ENCODE measurements at regions of chr5 and their contacts with region 1.

Region 1: DNA sequence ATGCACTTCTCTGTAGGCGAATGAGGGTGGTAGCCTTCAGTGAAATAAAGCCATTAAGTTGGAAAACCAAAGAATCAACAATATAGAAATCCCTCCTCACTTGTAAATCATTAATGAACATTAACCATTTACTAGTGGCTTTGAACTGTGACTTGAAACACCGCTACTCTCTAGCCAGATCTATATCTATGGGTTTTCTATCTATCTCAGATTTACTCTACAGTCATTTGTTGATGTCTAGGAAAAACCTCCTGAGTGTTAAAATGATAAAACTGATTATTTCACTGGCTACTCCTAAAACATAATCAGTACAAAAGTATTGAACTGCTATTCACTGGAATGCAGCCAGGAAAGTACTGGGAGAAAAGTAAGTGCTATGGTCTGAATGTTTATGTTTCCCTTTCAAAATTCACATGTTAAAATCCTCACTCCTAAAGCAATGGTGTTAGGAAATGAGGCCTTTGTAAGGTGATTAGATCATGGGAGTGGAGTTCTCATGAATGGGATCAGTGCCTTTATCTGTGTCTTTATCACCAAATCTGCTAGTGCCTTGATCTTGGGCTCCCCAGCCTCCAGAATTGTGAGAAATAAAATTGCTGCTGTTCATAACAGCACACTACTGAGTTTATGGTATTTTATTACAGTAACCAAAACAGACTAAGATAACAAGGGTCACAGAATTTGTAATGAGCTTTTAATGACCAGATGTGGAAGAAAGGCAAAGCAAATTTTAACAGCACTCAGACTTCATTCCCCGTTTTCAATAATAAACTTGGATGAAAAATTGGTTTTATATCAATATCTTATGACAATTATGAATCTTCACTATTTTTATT is 8.6 kb upstream of the OXCT1 start:
- DNase-seq: no peak

Region 2: DNA sequence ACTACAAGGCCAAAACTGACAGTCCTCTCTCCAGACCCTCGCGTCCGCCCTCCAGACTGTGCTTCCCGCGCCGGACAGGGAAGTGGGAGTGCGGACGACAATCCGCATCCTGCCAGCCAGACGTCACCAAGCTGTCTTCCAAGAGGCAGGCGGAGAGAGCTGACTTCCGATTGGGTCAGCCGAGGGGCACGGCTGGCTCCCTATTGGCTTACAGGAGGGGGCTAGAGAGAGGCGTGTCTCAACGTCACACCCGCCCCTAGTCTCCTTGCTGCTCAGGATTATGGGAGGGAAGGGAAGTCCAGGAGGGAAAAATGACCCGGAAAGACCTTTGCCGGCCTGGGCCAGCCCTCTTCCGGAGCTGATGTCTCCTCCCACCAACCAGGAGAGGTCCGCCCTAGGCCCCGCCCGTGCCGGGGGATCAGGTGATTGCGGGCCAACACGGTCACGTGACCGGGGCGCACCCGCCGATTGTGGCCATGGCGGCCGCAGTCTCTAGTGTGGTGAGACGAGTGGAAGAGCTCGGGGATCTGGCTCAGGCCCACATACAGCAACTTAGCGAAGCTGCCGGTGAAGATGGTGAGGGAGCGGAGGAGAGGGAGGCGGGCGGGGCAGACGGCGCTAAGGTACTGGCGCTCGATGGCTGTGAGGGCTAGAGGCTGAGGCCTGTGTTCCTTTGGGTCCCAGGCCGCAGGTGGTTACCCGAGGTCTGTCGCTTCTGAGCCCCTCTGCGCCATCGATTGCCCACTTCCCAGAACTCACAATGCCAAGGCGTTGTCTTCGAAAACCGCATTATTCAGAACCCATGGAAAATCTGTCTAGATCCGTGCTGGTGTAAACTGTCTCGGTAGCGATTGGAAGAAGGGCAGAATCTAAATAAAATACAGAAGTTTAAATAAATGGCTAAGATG is 25.3 kb after region 1 on chr5 and contains the start of gene RIMOC1:
- intact Hi-C with region 1: no loop called
- DNase-seq: peak; percentile 99
- total RNA-seq, gene RIMOC1: 31.1 to 33.7 TPM

Region 3: GRCh38 chr5:41967852-41968719 is 89.2 kb after region 1 on chr5:
- intact Hi-C with region 1: no loop called
- DNase-seq: no peak

Region 4: DNA sequence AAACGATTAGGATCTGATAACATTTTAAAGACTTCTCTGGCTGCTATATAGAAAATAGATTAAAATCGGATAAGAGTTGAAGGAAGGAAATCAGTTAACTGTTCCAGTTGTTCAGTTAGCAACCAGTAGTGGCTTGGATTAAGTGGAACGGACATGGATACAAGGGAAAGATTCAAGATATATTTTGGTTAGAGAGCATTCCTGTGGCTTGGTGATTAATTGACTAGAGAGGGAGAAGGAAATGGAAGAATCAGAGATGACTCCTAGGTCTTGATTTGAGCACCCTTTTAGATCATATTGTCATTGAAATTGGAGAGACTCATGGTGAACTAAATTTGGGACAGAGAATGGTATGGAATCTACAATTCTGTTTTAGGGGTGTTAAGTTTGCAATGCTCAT is 142.3 kb after region 1 on chr5:
- intact Hi-C with region 1: loop called in 1 of 2 experiments (anchors 5 kb)
- DNase-seq: no peak